Left ventricle myocardium superior (tissue), 1 donor: ENCODE measurements at regions of chr10 and their contacts with region 1.

Region 1: DNA sequence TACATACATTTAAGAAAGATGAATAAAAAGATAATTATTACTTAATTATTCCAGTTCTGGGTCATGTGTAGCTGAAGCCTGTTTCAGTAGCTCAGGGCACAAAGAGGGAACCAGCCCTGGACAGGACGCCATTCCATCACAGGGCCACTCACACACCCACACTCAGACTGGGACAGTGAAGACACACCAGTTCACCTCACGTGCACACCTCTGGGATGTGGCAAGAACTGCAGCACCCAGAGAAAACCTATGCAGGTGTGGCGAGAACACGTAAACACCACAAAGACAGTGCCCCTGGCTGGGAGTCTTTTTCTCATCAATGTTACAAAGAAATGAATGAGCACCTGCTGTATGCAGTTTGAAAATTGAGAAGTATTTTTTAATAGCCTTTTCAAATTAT is 1.6 kb upstream of the IDI1 start:
- DNase-seq: no peak
- ATAC-seq: no peak

Region 2: DNA sequence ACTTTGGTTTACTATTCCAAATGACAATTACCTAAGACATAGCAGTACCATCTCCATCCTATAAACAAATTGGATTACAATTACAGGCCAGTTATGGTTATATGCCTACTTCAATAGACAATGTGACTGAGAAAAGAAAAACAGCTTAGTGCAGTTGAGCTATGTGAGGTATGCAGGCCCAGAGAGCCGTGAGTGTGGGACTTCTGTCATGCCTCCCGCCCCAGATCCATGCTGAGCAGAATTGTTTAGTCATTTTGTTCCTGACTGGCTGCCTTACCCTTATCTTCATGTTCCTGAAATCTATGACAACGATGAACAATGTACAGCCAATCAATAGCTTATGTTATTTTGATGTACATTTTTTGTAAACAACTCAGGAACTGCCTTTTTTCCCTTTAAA is 140.7 kb before region 1 on chr10:
- intact Hi-C with region 1: no loop called
- DNase-seq: peak; percentile 42
- ATAC-seq: peak; percentile 88

Region 3: GRCh38 chr10:970311-971149 is 80.0 kb before region 1 on chr10:
- intact Hi-C with region 1: no loop called
- DNase-seq: no peak
- ATAC-seq: peak; percentile 32

Region 4: GRCh38 chr10:987870-988666 is 62.5 kb before region 1 on chr10 and contains the start of gene GTPBP4:
- intact Hi-C with region 1: loop called (anchors 5 kb)
- DNase-seq: peak; percentile 99
- ATAC-seq: peak; percentile 99
- total RNA-seq, gene GTPBP4: 27.8 TPM

Region 5: GRCh38 chr10:1400101-1401070 is 349.8 kb after region 1 on chr10:
- intact Hi-C with region 1: no loop called
- DNase-seq: no peak
- ATAC-seq: no peak